ENCODE measurements at regions of chr22 and their contacts with region 1.

Region 1: DNA sequence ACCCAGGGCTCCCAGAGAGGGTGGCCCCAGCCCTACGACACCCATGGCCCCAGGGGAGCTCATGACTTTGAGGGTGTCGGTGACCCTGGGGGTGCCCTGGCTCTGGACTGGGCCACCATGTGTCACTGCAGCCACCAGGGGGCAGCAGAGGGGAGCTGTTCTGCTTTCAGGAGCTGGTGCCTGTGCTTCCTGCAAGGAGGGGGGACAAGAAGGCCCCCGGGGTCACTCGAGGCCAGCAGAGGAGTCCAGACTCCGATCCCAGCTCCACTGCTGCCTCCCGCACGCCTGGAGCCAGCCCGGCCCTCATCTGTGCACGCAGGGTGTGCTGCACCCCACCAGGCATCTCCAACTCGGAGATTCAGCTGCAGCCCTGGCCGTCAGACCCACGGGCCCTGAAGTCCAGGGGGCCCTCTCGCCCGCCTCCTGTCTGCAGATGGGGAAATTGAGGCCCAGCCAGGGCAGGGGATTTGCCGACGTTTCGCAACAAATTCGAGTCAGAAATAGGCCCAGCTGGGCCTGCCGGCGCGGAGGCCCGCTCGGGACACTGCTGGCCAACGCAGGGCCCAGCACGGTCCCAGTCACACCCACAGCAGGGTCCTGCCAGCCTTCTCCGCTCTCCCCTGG is 29.5 kb upstream of the WNT7B start:
- DNase-seq: peak; percentile 78
- H3K4me3 ChIP-seq: peak overlapping the region; percentile 13 to 40 (median 19)
- H3K27ac ChIP-seq: peak overlapping the region; percentile 85
- H3K4me1 ChIP-seq: peaks cover 46% of the 10 kb centered on the region
- H3K27me3 ChIP-seq: no peaks in the 10 kb centered on the region
- CTCF ChIP-seq: peak; percentile 77 to 89

Region 2: DNA sequence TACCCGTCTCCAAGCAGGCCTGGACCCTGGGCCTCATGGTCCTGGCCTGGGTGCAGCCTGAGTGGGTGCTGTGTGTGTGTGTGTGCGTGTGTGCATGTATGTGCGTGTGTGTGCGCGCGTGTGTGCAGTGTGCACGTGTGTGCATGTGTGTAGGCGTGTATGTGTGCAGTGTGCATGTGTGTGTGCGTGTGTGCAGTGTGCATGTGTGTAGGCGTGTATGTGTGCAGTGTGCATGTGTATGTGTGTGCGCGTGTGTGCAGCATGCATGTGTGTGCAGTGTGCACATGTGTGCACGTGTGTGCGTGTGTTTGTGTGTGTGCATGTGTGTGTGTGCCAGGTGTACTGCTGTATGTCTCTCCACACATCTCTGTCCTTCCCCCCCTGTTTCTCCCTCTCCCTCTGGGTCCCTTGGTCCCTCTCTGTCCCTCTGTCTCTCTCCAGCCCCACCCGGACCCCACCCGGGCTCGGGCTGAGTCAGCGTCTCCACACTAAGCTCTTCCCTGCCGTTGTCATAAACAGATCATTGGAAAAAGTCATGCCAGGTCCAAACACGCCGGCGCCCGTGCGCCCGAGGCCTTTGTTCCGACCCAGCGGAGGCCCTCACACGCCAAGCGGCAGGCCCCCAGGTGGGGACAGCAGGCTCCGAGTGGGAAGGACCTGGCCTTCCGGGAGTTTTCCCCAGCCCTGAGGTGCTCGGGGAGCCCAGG is 63.6 kb before region 1 on chr22:
- CTCF ChIA-PET with region 1: no interaction called
- dilution Hi-C with region 1: no loop called
- in situ Hi-C with region 1: no loop called
- intact Hi-C with region 1: no loop called
- DNase-seq: peak; percentile 37
- H3K4me3 ChIP-seq: no peak overlapping the region
- H3K27ac ChIP-seq: no peak overlapping the region
- H3K4me1 ChIP-seq: peaks cover 6% of the 10 kb centered on the region
- H3K27me3 ChIP-seq: peaks cover 5% of the 10 kb centered on the region
- CTCF ChIP-seq: no peak

Region 3: GRCh38 chr22:46087336-46088277 is 81.1 kb after region 1 on chr22:
- CTCF ChIA-PET with region 1: interaction called, 3 read pairs
- dilution Hi-C with region 1: no loop called
- in situ Hi-C with region 1: no loop called
- intact Hi-C with region 1: loop called (anchors 1 kb)
- DNase-seq: peak; percentile 84
- H3K4me3 ChIP-seq: peak overlapping the region; percentile 49 to 95 (median 93)
- H3K27ac ChIP-seq: peak overlapping the region; percentile 94
- H3K4me1 ChIP-seq: peaks cover 88% of the 10 kb centered on the region
- H3K27me3 ChIP-seq: no peaks in the 10 kb centered on the region
- CTCF ChIP-seq: no peak

Region 4: DNA sequence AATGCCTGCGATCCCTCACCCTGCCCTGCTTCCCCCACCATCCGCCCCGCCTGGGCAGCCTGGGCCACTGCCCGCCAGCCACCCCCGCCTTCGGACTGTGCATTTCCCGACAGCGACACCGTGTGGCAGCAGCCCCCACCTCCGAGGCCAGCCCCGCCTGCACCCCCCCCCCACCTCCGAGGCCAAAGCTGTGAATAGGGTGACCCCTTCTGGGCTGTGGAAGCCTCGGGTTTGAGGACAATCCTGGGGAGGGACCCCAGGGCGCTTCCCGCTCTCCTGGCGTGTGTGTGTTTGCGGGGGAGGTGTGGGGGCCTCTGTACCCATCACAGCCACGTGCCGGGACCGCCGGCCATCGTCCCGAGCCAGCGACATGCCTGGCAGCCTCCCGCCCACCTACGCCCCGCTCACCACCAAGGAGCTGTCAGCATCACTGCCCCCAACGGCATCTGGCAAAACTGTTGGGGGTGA is 110.0 kb after region 1 on chr22:
- CTCF ChIA-PET with region 1: interaction called, 7 read pairs
- dilution Hi-C with region 1: no loop called
- in situ Hi-C with region 1: loop called in 1 of 2 experiments (anchors 5 kb)
- intact Hi-C with region 1: loop called (anchors 1 kb)
- DNase-seq: peak; percentile 63
- H3K4me3 ChIP-seq: no peak overlapping the region
- H3K27ac ChIP-seq: no peak overlapping the region
- H3K4me1 ChIP-seq: peaks cover 30% of the 10 kb centered on the region
- H3K27me3 ChIP-seq: no peaks in the 10 kb centered on the region
- CTCF ChIP-seq: peak; percentile 29 to 83

Region 5: DNA sequence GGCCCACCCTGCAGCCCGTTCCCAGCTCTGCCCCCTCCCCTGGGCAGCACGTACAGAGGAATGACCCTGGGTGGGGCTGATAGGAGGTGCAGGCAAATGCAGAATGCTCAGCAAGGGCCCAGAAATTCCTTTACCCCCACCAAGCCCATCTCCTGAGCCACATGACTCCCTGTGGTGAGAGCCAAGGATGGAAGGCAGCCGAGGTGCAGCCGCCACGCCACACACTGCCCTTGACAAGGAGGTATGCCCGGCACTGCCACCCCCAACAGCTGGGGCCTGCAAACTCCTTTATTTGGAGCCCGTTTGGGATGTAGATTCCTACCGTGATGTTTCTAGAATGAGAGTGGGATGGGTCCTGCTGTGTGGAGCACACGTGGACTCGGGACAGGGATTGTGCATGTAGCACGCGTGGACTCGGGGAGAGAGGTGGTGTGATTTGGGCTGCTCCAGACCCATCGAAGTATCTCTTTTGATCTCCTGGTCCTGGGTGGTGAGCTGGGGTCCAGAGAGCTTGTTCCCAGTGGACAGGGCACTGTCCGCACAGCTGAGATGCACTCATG is 303.1 kb after region 1 on chr22:
- CTCF ChIA-PET with region 1: no interaction called
- dilution Hi-C with region 1: no loop called
- in situ Hi-C with region 1: no loop called
- intact Hi-C with region 1: loop called (anchors 1 kb)
- DNase-seq: no peak
- H3K4me3 ChIP-seq: no peak overlapping the region
- H3K27ac ChIP-seq: no peak overlapping the region
- H3K4me1 ChIP-seq: peaks cover 5% of the 10 kb centered on the region
- H3K27me3 ChIP-seq: no peaks in the 10 kb centered on the region
- CTCF ChIP-seq: no peak

Measured in mammary epithelial cell (primary cell).